CD8-positive, alpha-beta T cell (primary cell): ENCODE measurements at regions of chr18 and their contacts with region 1.

Region 1: GRCh38 chr18:76046221-76046620 is 448.8 kb downstream of the ZNF516 start:
- DNase-seq: no peak
- ATAC-seq: no peak
- H3K4me3 ChIP-seq: no peak overlapping the region
- H3K4me3 Mint-ChIP-seq: no peak overlapping the region
- H3K27ac ChIP-seq: no peak overlapping the region
- H3K27ac Mint-ChIP-seq: no peak overlapping the region
- H3K4me1 ChIP-seq: no peaks in the 10 kb centered on the region
- H3K4me1 Mint-ChIP-seq: no peaks in the 10 kb centered on the region
- H3K27me3 ChIP-seq: no peaks in the 10 kb centered on the region
- H3K27me3 Mint-ChIP-seq: no peaks in the 10 kb centered on the region
- CTCF ChIP-seq: no peak

Region 2: DNA sequence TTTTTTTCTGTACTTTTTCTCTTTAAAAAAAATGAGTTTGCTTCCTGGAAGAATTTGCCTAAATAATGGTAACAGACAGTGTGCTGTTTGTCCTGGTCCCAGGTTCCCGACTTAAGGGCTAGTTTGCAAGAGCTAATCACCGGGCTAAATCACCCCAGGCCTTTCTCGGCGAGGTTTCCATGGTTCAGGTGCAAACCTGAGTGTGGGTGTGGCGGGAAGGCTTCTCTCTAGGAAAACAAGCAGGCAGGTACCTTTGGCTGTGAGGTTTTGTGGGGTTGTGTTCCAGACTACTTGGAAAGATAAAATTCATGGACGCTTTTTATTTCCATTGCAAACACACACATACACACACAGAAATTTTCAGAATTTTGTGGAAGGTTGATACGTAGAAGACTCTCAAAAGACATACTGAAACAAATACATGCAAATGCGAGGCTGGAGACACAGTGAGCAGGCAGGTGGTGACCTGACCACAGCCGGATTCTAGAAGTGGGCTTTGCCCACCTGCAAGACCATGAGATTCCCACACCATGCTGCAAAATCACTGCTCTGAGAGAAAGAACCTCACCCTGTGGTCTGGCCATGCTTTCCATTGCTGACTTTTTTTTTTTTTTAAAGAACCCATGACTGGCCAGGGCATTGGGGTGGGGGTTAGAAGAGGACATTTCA is 1511.1 kb before region 1 on chr18:
- CTCF ChIA-PET with region 1: no interaction called
- POLR2A ChIA-PET with region 1: no interaction called
- intact Hi-C with region 1: loop called in 1 of 2 experiments (anchors 10 kb)
- DNase-seq: no peak
- ATAC-seq: no peak
- H3K4me3 ChIP-seq: no peak overlapping the region
- H3K4me3 Mint-ChIP-seq: no peak overlapping the region
- H3K27ac ChIP-seq: no peak overlapping the region
- H3K27ac Mint-ChIP-seq: no peak overlapping the region
- H3K4me1 ChIP-seq: no peaks in the 10 kb centered on the region
- H3K4me1 Mint-ChIP-seq: no peaks in the 10 kb centered on the region
- H3K27me3 ChIP-seq: no peaks in the 10 kb centered on the region
- H3K27me3 Mint-ChIP-seq: peaks cover 17% of the 10 kb centered on the region
- CTCF ChIP-seq: no peak